ENCODE measurements at regions of chr16 and their contacts with region 1.

Region 1: GRCh38 chr16:89330177-89330856 is 112.8 kb downstream of the ZNF778 start:
- DNase-seq: no peak
- ATAC-seq: no peak

Region 2: DNA sequence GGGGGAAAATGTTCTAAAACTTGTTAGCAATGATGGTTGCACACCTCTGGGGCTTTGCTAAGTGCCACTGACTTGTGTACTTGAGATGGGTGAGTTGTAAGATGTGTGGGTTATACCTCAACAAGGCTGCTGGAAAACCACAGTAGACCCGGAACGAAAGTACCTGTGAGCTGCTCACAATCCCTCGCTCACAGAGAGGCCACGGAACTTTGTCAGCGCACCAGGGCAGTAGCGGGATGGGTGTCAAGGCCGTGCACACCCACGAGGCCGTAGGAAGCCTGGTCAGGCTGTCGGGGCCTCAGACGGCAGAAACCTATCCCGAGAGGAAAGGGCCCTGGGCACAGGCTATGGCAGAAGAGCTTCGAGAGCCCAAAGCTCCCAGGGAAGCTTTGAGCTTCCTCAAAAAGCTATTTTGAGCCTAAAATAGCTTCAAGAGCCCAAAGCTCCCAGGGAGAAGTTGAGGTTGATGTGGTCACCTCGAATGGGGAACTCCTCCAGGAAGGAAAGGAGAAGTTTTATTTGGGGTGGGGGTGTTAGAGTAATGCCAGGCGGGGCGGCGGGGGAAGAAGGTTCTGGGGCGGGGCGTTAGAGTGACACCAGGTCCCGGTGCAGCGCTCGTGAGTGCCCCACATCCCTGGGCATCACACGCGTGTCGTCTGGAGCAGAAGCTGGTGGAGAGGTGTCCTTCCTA is 372.3 kb before region 1 on chr16:
- intact Hi-C with region 1: no loop called
- DNase-seq: peak; percentile 85
- ATAC-seq: peak; percentile 68

Region 3: GRCh38 chr16:89383082-89384003 is 53.0 kb after region 1 on chr16:
- intact Hi-C with region 1: loop called (anchors 5 kb)
- DNase-seq: no peak
- ATAC-seq: peak; percentile 56

Region 4: DNA sequence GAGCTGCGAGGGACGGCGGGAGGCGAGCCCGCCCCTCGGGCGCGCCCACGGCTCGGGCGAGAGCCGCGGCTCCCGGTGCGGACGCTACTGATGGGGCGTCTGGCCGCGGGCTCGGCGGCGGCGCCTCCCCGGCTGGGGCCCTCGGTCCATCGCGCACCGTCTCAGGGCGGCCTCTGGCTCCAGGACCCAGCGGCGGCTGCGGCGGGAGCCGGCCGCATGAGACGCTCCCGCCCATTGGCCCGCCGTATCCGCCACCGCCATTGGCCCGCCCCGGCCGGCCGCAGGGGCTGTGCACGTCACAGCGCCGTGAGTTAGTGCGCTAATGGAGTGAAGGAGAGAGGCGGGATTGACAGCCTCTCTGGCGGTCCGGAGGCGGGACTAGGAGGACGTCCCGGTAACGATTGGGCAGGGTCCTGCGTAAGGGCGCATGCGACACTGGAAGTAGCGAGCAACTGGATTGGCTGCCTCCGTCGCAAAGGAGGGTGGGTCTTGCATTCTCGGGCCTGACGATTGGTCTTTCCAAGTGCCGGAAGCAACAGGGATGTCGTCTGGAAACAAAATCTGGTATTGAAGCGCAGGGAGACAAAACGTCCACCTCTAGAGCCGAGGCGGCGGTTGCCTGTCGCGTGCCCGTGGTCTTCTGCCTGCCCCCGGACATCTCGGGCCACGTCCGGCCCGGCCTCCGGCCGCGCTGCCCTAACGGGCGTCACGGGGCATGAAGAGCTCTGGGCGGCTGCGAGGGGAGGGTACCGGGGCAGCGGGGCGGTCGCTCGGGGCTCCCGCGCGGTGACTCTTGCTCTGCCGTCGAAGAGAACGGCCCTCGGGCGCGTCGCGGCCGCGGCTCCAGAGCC is 160.3 kb after region 1 on chr16 and contains the start of gene ANKRD11:
- intact Hi-C with region 1: loop called (anchors 1 kb)
- DNase-seq: peak; percentile 99
- ATAC-seq: peak; percentile 98
- total RNA-seq, gene ANKRD11: 64.9 TPM

Region 5: GRCh38 chr16:89560378-89561141 is 230.2 kb after region 1 on chr16 and contains the start of gene RPL13:
- intact Hi-C with region 1: loop called (anchors 2 kb)
- DNase-seq: peak; percentile 99
- ATAC-seq: peak; percentile 97
- total RNA-seq, gene RPL13: 1,162 TPM

Measured in Right ventricle myocardium inferior (tissue), 1 donor.